MCF 10A (cell line): ENCODE measurements at regions of chr6 and their contacts with region 1.

Region 1: GRCh38 chr6:31271641-31272357 is at the start of gene HLA-C:
- DNase-seq: peak; percentile 98
- H3K4me3 Mint-ChIP-seq: peak within 1 kb of the TSS; percentile 87
- H3K27ac Mint-ChIP-seq: peak within 1 kb of the TSS; percentile 97
- H3K4me1 Mint-ChIP-seq: peaks cover 14% of the 10 kb centered on the region
- H3K27me3 Mint-ChIP-seq: peaks cover 40% of the 10 kb centered on the region
- CTCF ChIP-seq: no peak
- total RNA-seq, gene HLA-C: 151 and 228 TPM in 2 replicates

Region 2: GRCh38 chr6:31203345-31203979 is 68.3 kb before region 1 on chr6:
- CTCF ChIA-PET with region 1: no interaction called
- POLR2A ChIA-PET with region 1: interaction called, 3 read pairs
- intact Hi-C with region 1: loop called (anchors 2 kb)
- DNase-seq: peak; percentile 73
- H3K4me3 Mint-ChIP-seq: peak overlapping the region; percentile 84
- H3K27ac Mint-ChIP-seq: peak overlapping the region; percentile 96
- H3K4me1 Mint-ChIP-seq: peaks cover 25% of the 10 kb centered on the region
- H3K27me3 Mint-ChIP-seq: no peaks in the 10 kb centered on the region
- CTCF ChIP-seq: no peak

Region 3: DNA sequence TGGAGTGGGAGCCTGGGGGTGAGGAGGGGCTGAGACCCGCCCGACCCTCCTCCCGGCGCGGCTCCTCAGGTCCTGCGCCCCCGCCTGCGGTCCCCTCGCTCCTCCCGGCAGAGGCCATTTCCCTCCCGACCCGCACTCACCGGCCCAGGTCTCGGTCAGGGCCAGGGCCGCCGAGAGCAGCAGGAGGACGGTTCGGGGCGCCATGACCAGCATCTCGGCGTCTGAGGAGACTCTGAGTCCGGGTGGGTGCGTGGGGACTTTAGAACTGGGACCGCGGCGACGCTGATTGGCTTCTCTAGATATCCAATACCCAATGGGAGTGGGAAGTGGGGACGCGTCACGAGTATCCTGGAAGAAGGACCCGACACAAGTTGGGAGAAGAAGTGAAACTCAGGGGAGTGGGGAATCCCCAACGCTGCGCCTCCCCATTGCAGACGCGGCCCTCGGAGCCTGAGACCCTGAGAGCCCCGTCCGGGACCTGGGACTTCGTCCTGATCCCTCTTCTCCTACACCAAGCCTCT is 85.2 kb after region 1 on chr6 and contains the start of gene HLA-B:
- CTCF ChIA-PET with region 1: no interaction called
- POLR2A ChIA-PET with region 1: no interaction called
- intact Hi-C with region 1: loop called (anchors 2 kb)
- DNase-seq: peak; percentile 85
- H3K4me3 Mint-ChIP-seq: peak within 1 kb of the TSS; percentile 78
- H3K27ac Mint-ChIP-seq: peak within 1 kb of the TSS; percentile 80
- H3K4me1 Mint-ChIP-seq: peaks cover 5% of the 10 kb centered on the region
- H3K27me3 Mint-ChIP-seq: peaks cover 62% of the 10 kb centered on the region
- CTCF ChIP-seq: no peak
- total RNA-seq, gene HLA-B: 87.4 and 180 TPM in 2 replicates